ENCODE measurements at regions of chr15 and their contacts with region 1.

Region 1: GRCh38 chr15:56245871-56246814 is 2.5 kb upstream of the RFX7 start:
- DNase-seq: peak; percentile 83
- H3K4me3 ChIP-seq: peak overlapping the region; percentile 8 to 11
- H3K27ac ChIP-seq: no peak overlapping the region
- H3K4me1 ChIP-seq: no peaks in the 10 kb centered on the region
- H3K27me3 ChIP-seq: no peaks in the 10 kb centered on the region
- CTCF ChIP-seq: peak; percentile 82 to 97 (median 95)
- POLR2A ChIP-seq: no peak

Region 2: GRCh38 chr15:55993111-55993803 is 252.9 kb before region 1 on chr15 and contains the start of gene NEDD4:
- intact Hi-C with region 1: loop called (anchors 5 kb)
- DNase-seq: peak; percentile 82
- H3K4me3 ChIP-seq: peak within 1 kb of the TSS; percentile 75 to 93
- H3K27ac ChIP-seq: peak within 1 kb of the TSS; percentile 89 to 93
- H3K4me1 ChIP-seq: no peaks in the 10 kb centered on the region
- H3K27me3 ChIP-seq: no peaks in the 10 kb centered on the region
- CTCF ChIP-seq: peak in 2 of 4 experiments; percentile 52 to 53
- POLR2A ChIP-seq: peak; percentile 39
- total RNA-seq, gene NEDD4: 9.5 to 14.8 TPM

Region 3: GRCh38 chr15:56098195-56098863 is 147.8 kb before region 1 on chr15:
- intact Hi-C with region 1: loop called (anchors 5 kb)
- DNase-seq: no peak
- H3K4me3 ChIP-seq: no peak overlapping the region
- H3K27ac ChIP-seq: no peak overlapping the region
- H3K4me1 ChIP-seq: no peaks in the 10 kb centered on the region
- H3K27me3 ChIP-seq: no peaks in the 10 kb centered on the region
- CTCF ChIP-seq: no peak
- POLR2A ChIP-seq: no peak

Region 4: GRCh38 chr15:56428821-56429458 is 182.8 kb after region 1 on chr15:
- intact Hi-C with region 1: loop called (anchors 10 kb)
- DNase-seq: no peak
- H3K4me3 ChIP-seq: no peak overlapping the region
- H3K27ac ChIP-seq: no peak overlapping the region
- H3K4me1 ChIP-seq: no peaks in the 10 kb centered on the region
- H3K27me3 ChIP-seq: no peaks in the 10 kb centered on the region
- CTCF ChIP-seq: peak in 3 of 4 experiments; percentile 45 to 54 (median 53)
- POLR2A ChIP-seq: no peak